Activated CD4-positive, alpha-beta memory T cell treated with anti-CD3 and anti-CD28 coated beads for 36 hours (primary cell): ENCODE measurements at regions of chr5 and their contacts with region 1.

Region 1: GRCh38 chr5:132736853-132737833 is at the start of gene KIF3A:
- DNase-seq: peak; percentile 99
- H3K4me3 Mint-ChIP-seq: peak within 1 kb of the TSS; percentile 84
- H3K27ac Mint-ChIP-seq: peak within 1 kb of the TSS; percentile 78
- H3K4me1 Mint-ChIP-seq: peaks cover 35% of the 10 kb centered on the region
- H3K27me3 Mint-ChIP-seq: peaks cover 2% of the 10 kb centered on the region
- total RNA-seq, gene KIF3A: 12.1 to 16.1 TPM

Region 2: GRCh38 chr5:132386644-132387286 is 350.4 kb before region 1 on chr5:
- CTCF ChIA-PET with region 1: no interaction called
- POLR2A ChIA-PET with region 1: no interaction called
- intact Hi-C with region 1: loop called (anchors 5 kb)
- DNase-seq: peak; percentile 87
- H3K4me3 Mint-ChIP-seq: no peak overlapping the region
- H3K27ac Mint-ChIP-seq: peak overlapping the region; percentile 14
- H3K4me1 Mint-ChIP-seq: peaks cover 42% of the 10 kb centered on the region
- H3K27me3 Mint-ChIP-seq: no peaks in the 10 kb centered on the region

Region 3: DNA sequence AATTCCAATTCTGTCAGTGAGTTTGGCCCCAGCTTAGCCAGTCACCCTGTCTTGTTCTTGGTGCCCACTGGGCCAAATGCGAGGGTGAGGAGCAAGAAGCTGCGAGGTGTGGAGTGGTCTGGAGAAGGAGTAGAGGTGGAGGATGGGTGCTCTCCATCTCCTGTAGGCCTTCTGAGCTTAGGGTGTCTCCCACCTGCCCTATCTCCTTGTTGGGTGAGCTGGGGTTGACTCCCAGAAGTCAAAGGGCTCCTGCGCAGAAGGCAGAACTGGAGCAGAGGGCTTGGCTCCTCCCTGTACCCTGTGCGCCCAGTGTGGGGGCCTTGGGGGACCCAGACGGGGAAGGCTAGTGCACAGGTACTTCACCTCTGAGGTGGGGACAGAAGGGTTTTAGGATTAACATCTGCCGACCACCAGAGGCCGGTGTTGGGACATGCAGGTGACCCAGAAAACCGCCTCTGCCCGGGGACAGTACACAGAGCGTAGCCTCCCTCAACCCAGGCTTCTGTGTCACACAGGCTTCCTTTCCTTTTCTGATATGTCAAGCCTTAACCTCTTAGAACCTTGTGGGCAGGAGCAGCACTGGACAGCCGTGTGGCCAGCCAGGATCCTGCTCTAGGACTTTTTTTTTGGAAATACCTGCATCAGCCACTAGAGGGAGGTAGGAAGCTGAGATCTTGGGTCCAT is 210.7 kb before region 1 on chr5:
- CTCF ChIA-PET with region 1: interaction called, 4 read pairs
- POLR2A ChIA-PET with region 1: no interaction called
- intact Hi-C with region 1: loop called (anchors 5 kb)
- DNase-seq: peak; percentile 48
- H3K4me3 Mint-ChIP-seq: no peak overlapping the region
- H3K27ac Mint-ChIP-seq: no peak overlapping the region
- H3K4me1 Mint-ChIP-seq: peaks cover 38% of the 10 kb centered on the region
- H3K27me3 Mint-ChIP-seq: peaks cover 2% of the 10 kb centered on the region

Region 4: DNA sequence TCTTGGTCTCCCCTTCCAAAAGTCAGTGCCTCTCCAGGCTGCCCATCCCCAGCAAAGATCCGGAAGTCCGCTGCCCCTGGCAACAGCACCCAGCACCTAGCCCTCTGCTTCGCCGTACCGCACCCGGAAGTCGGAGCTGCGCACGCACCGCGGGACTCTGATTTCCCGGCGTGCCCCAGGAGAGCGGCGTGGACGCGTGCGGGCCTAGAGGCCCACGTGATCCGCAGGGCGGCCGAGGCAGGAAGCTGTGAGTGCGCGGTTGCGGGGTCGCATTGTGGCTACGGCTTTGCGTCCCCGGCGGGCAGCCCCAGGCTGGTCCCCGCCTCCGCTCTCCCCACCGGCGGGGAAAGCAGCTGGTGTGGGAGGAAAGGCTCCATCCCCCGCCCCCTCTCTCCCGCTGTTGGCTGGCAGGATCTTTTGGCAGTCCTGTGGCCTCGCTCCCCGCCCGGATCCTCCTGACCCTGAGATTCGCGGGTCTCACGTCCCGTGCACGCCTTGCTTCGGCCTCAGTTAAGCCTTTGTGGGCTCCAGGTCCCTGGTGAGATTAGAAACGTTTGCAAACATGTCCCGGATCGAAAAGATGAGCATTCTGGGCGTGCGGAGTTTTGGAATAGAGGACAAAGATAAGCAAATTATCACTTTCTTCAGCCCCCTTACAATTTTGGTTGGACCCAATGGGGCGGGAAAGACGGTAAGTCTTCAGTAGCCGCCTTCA is 180.2 kb before region 1 on chr5 and contains the start of gene RAD50:
- CTCF ChIA-PET with region 1: no interaction called
- POLR2A ChIA-PET with region 1: no interaction called
- intact Hi-C with region 1: loop called (anchors 5 kb)
- DNase-seq: peak; percentile 96
- H3K4me3 Mint-ChIP-seq: peak within 1 kb of the TSS; percentile 99
- H3K27ac Mint-ChIP-seq: peak within 1 kb of the TSS; percentile 94
- H3K4me1 Mint-ChIP-seq: peaks cover 19% of the 10 kb centered on the region
- H3K27me3 Mint-ChIP-seq: no peaks in the 10 kb centered on the region
- total RNA-seq, gene RAD50: 44.6 to 47.6 TPM

Region 5: GRCh38 chr5:132688536-132689339 is 48.4 kb before region 1 on chr5:
- CTCF ChIA-PET with region 1: no interaction called
- POLR2A ChIA-PET with region 1: no interaction called
- intact Hi-C with region 1: loop called (anchors 1 kb)
- DNase-seq: peak; percentile 36
- H3K4me3 Mint-ChIP-seq: no peak overlapping the region
- H3K27ac Mint-ChIP-seq: peak overlapping the region; percentile 24
- H3K4me1 Mint-ChIP-seq: peaks cover 36% of the 10 kb centered on the region
- H3K27me3 Mint-ChIP-seq: no peaks in the 10 kb centered on the region

Region 6: GRCh38 chr5:132753135-132753987 is 16.2 kb after region 1 on chr5:
- CTCF ChIA-PET with region 1: interaction called, 45 read pairs
- POLR2A ChIA-PET with region 1: interaction called, 9 read pairs
- intact Hi-C with region 1: loop called (anchors 1 kb)
- DNase-seq: peak; percentile 47
- H3K4me3 Mint-ChIP-seq: no peak overlapping the region
- H3K27ac Mint-ChIP-seq: no peak overlapping the region
- H3K4me1 Mint-ChIP-seq: peaks cover 38% of the 10 kb centered on the region
- H3K27me3 Mint-ChIP-seq: no peaks in the 10 kb centered on the region

Region 7: DNA sequence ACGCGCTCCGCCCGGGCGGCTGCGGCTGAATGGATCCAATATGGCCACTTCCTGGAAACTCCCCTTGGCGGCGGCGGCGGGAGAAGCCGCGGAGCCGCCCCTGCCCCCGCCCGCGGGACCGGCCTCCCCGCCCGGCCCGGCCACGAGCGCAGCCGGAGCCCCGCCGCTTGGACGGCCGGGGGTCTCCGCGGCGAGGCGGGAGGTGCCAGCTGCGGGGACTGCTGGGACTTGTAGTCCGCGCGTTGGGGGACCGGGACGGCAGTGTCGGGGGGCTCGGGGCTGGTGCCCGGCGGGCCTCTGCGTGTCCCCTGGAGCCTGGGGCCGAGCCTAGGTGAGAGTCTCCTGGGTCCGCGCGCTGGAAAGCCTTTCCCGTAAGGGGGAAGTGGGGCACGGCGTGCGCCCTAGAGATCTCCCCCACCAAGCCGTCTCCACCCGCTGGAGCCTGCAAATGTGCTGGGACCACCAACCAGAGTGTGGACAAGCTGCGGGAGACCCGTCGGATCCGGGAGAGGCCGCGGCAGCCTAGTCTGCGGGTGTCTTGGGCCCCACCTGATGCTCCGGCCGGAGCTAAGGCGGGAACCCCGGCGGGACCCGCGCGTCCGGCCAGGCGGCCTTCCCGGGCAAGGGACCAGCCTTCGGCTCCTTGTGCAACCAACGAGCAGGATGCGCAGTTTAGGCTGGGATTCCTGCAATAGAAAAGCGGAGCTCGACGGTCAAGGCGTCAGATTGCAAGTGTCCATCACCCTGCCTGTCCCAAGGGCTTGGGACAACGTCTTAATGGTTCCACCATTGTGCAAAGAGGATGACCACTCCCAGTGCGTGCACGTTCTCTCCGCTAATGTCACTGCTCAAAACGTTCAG is 40.3 kb after region 1 on chr5 and contains the start of gene SEPTIN8:
- CTCF ChIA-PET with region 1: interaction called, 4 read pairs
- POLR2A ChIA-PET with region 1: interaction called, 3 read pairs
- intact Hi-C with region 1: loop called (anchors 1 kb)
- DNase-seq: peak; percentile 62
- H3K4me3 Mint-ChIP-seq: peak within 1 kb of the TSS; percentile 68
- H3K27ac Mint-ChIP-seq: no peak within 1 kb of the TSS
- H3K4me1 Mint-ChIP-seq: peaks cover 2% of the 10 kb centered on the region
- H3K27me3 Mint-ChIP-seq: peaks cover 13% of the 10 kb centered on the region
- total RNA-seq, gene SEPTIN8: 31.1 to 32.8 TPM